CD4-positive, alpha-beta T cell (primary cell): ENCODE measurements at regions of chr11 and their contacts with region 1.

Region 1: DNA sequence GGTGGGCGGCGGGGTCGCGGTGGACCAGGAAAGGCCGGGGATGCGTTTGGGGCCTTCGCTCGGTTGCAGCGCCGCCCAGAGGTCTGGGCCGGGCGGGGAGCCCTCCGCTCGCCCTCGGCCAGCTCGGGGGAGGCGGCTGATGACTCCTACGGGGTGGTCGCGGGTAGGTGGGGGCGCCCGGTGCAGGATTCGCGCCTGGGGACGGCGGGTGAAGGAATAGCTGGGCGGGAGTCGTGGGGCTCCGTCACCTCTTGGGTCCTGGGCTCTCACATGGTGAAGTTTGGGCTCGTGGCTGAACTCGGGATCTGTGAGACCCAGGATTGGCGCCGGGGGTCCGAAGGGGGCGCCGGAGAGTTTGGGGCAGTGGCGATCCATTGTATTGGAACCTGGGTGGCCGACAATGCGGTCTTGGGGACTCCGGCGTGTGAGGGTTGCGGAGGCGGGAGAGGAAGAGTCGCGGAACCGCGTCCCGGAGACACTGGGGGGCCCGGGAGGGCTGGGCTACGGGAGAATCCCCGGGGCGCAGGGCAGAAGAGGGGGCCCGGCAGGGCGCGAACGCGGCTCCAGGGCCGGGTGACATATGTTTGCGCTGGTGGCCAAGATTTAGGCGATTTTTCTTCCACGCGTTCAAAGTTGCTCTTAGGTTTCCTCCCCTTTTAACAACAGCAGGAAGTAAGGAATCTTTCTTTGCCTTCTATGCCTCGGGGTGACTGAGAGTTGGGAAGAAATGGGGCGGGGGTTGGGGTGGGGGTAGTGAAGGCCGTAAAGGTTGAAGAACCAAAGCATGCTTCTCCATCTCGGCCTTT is 935 bp downstream of the QSER1 start:
- DNase-seq: peak in 11 of 14 experiments; percentile 22 to 76 (median 39)
- ATAC-seq: peak; percentile 35
- H3K4me3 ChIP-seq: peak overlapping the region; percentile 83
- H3K4me3 Mint-ChIP-seq: peak overlapping the region; percentile 91
- H3K27ac ChIP-seq: peak overlapping the region in 1 of 2 donors; percentile 18
- H3K27ac Mint-ChIP-seq: peak overlapping the region; percentile 80
- H3K4me1 ChIP-seq: peaks cover 14% of the 10 kb centered on the region
- H3K4me1 Mint-ChIP-seq: peaks cover 37% of the 10 kb centered on the region
- H3K27me3 ChIP-seq: no peaks in the 10 kb centered on the region
- H3K27me3 Mint-ChIP-seq: no peaks in the 10 kb centered on the region
- CTCF ChIP-seq: peak; percentile 48

Region 2: DNA sequence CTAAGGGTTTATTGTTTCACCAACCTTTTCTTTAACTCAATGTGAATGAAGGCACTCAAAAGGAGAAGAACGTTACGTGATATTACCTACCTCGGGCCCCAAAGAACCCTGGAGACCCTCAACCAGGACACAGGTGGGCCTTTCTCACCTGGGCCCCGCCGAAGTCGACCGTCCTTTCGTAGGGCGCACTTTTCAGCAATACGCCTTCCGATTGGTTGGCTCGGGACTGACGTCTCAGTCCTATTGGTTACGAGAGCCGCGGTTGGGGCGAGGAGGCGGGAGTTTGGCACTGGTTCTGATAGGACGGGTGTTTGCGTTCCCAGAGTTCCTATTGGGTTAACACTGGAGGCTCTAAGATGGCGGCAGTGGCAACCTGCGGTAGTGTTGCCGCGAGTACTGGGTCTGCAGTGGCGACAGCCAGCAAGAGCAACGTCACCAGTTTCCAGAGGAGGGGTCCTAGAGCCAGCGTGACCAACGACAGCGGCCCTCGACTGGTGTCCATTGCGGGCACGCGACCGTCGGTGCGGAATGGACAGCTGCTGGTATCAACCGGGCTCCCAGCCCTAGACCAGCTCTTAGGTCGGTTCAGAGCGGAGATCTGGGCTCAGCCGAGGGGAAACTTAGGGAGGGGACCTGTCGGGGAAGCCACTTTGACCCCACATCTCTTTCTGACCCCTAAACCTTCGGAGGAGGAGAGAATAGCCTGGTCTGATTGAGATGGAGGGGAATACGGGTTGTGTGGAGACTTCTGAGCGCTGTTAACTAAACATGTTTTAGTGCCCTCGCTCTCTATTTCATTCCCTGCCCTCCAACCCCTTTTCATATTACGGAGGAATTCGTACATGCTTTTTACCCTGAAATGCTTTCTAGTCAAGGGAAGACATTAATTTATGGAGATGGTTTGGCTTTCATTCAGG is 1383.9 kb before region 1 on chr11 and contains the starts of genes ELP4 and IMMP1L:
- CTCF ChIA-PET with region 1: no interaction called
- POLR2A ChIA-PET with region 1: no interaction called
- intact Hi-C with region 1: loop called in 1 of 2 experiments (anchors 10 kb)
- DNase-seq: peak; percentile 91 to 97 (median 93)
- ATAC-seq: peak; percentile 98
- H3K4me3 ChIP-seq: peak within 1 kb of the TSS; percentile 86
- H3K4me3 Mint-ChIP-seq: peak within 1 kb of the TSS; percentile 94
- H3K27ac ChIP-seq: peak within 1 kb of the TSS; percentile 82 to 87
- H3K27ac Mint-ChIP-seq: peak within 1 kb of the TSS; percentile 92
- H3K4me1 ChIP-seq: peaks cover 2% of the 10 kb centered on the region
- H3K4me1 Mint-ChIP-seq: peaks cover 63% of the 10 kb centered on the region
- H3K27me3 ChIP-seq: no peaks in the 10 kb centered on the region
- H3K27me3 Mint-ChIP-seq: no peaks in the 10 kb centered on the region
- CTCF ChIP-seq: no peak
- total RNA-seq, gene ELP4: 9.5 to 10.3 TPM
- total RNA-seq, gene IMMP1L: 6.0 to 6.9 TPM

Region 3: GRCh38 chr11:32852207-32852606 is 41.3 kb before region 1 on chr11:
- CTCF ChIA-PET with region 1: no interaction called
- POLR2A ChIA-PET with region 1: no interaction called
- intact Hi-C with region 1: no loop called
- DNase-seq: peak in 3 of 14 experiments; percentile 4 to 11 (median 5)
- ATAC-seq: no peak
- H3K4me3 ChIP-seq: no peak overlapping the region
- H3K4me3 Mint-ChIP-seq: no peak overlapping the region
- H3K27ac ChIP-seq: no peak overlapping the region
- H3K27ac Mint-ChIP-seq: no peak overlapping the region
- H3K4me1 ChIP-seq: no peaks in the 10 kb centered on the region
- H3K4me1 Mint-ChIP-seq: no peaks in the 10 kb centered on the region
- H3K27me3 ChIP-seq: no peaks in the 10 kb centered on the region
- H3K27me3 Mint-ChIP-seq: peaks cover 3% of the 10 kb centered on the region
- CTCF ChIP-seq: no peak

Region 4: GRCh38 chr11:33015621-33016551 is 122.3 kb after region 1 on chr11 and contains the start of gene DEPDC7:
- CTCF ChIA-PET with region 1: no interaction called
- POLR2A ChIA-PET with region 1: interaction called, 4 read pairs
- intact Hi-C with region 1: loop called in 1 of 2 experiments (anchors 10 kb)
- DNase-seq: peak; percentile 57 to 89 (median 74)
- ATAC-seq: peak; percentile 76
- H3K4me3 ChIP-seq: peak within 1 kb of the TSS; percentile 57
- H3K4me3 Mint-ChIP-seq: peak within 1 kb of the TSS; percentile 96
- H3K27ac ChIP-seq: no peak within 1 kb of the TSS
- H3K27ac Mint-ChIP-seq: peak within 1 kb of the TSS; percentile 73
- H3K4me1 ChIP-seq: peaks cover 30% of the 10 kb centered on the region
- H3K4me1 Mint-ChIP-seq: peaks cover 55% of the 10 kb centered on the region
- H3K27me3 ChIP-seq: peaks cover 12 to 15% of the 10 kb centered on the region in 2 experiments
- H3K27me3 Mint-ChIP-seq: peaks cover 10% of the 10 kb centered on the region
- CTCF ChIP-seq: no peak
- total RNA-seq, gene DEPDC7: 2.9 to 3.1 TPM

Region 5: GRCh38 chr11:33161120-33162005 is 267.8 kb after region 1 on chr11 and contains the start of gene CSTF3:
- CTCF ChIA-PET with region 1: no interaction called
- POLR2A ChIA-PET with region 1: interaction called, 6 read pairs
- intact Hi-C with region 1: loop called in 1 of 2 experiments (anchors 5 kb)
- DNase-seq: peak; percentile 87 to 98 (median 94)
- ATAC-seq: peak; percentile 94
- H3K4me3 ChIP-seq: peak within 1 kb of the TSS; percentile 99
- H3K4me3 Mint-ChIP-seq: peak within 1 kb of the TSS; percentile 99
- H3K27ac ChIP-seq: peak within 1 kb of the TSS; percentile 66 to 71
- H3K27ac Mint-ChIP-seq: peak within 1 kb of the TSS; percentile 92
- H3K4me1 ChIP-seq: peaks cover 19% of the 10 kb centered on the region
- H3K4me1 Mint-ChIP-seq: peaks cover 61% of the 10 kb centered on the region
- H3K27me3 ChIP-seq: no peaks in the 10 kb centered on the region
- H3K27me3 Mint-ChIP-seq: no peaks in the 10 kb centered on the region
- CTCF ChIP-seq: peak; percentile 47
- total RNA-seq, gene CSTF3: 6.4 to 9.9 TPM

Region 6: DNA sequence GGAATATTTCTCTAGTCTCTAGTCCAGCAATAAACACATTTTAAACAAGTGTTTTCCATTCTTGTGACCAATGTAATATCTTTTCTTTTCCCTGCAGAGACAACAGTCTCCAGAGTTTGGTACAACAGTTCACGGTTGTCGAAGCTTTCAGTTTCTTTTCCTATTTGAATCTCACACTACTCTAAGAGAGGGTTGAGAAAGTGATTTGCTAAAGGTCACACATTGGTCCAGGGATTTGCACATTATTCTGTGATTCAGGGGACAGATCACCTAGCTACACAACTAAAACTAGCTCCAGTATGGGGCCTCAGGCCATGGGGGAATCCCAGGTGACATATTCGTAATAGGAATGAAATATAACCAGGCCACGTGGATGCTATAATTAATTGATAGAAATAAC is 496.1 kb after region 1 on chr11:
- CTCF ChIA-PET with region 1: no interaction called
- POLR2A ChIA-PET with region 1: no interaction called
- intact Hi-C with region 1: no loop called
- DNase-seq: no peak
- ATAC-seq: no peak
- H3K4me3 ChIP-seq: no peak overlapping the region
- H3K4me3 Mint-ChIP-seq: no peak overlapping the region
- H3K27ac ChIP-seq: no peak overlapping the region
- H3K27ac Mint-ChIP-seq: no peak overlapping the region
- H3K4me1 ChIP-seq: no peaks in the 10 kb centered on the region
- H3K4me1 Mint-ChIP-seq: no peaks in the 10 kb centered on the region
- H3K27me3 ChIP-seq: peaks cover 0 to 6% of the 10 kb centered on the region in 2 experiments
- H3K27me3 Mint-ChIP-seq: peaks cover 22% of the 10 kb centered on the region
- CTCF ChIP-seq: no peak

Region 7: GRCh38 chr11:33700425-33701271 is 807.1 kb after region 1 on chr11 and contains the start of gene C11orf91:
- CTCF ChIA-PET with region 1: no interaction called
- POLR2A ChIA-PET with region 1: no interaction called
- intact Hi-C with region 1: loop called in 1 of 2 experiments (anchors 10 kb)
- DNase-seq: peak; percentile 84 to 98 (median 94)
- ATAC-seq: peak; percentile 93
- H3K4me3 ChIP-seq: peak within 1 kb of the TSS; percentile 68
- H3K4me3 Mint-ChIP-seq: peak within 1 kb of the TSS; percentile 95
- H3K27ac ChIP-seq: no peak within 1 kb of the TSS
- H3K27ac Mint-ChIP-seq: peak within 1 kb of the TSS; percentile 64
- H3K4me1 ChIP-seq: peaks cover 14% of the 10 kb centered on the region
- H3K4me1 Mint-ChIP-seq: peaks cover 33% of the 10 kb centered on the region
- H3K27me3 ChIP-seq: no peaks in the 10 kb centered on the region
- H3K27me3 Mint-ChIP-seq: peaks cover 10% of the 10 kb centered on the region
- CTCF ChIP-seq: no peak
- total RNA-seq, gene C11orf91: 0.45 TPM in 1 of 2 experiments, not detected in the other

Region 8: DNA sequence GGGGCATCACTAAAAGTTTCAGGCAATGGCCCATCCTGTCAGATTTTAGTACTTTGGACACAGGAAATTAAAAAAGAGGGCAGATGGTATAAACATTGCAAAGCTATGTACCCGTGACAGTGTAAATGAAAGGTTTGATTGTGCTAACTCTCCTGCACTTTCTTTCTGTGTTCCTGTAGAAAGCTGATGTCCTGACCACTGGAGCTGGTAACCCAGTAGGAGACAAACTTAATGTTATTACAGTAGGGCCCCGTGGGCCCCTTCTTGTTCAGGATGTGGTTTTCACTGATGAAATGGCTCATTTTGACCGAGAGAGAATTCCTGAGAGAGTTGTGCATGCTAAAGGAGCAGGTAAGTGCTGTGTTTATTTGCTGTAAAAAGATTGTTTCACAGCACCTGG is 1555.5 kb after region 1 on chr11:
- CTCF ChIA-PET with region 1: no interaction called
- POLR2A ChIA-PET with region 1: no interaction called
- intact Hi-C with region 1: loop called in 1 of 2 experiments (anchors 10 kb)
- DNase-seq: peak in 1 of 14 experiments; percentile 18
- ATAC-seq: no peak
- H3K4me3 ChIP-seq: no peak overlapping the region
- H3K4me3 Mint-ChIP-seq: no peak overlapping the region
- H3K27ac ChIP-seq: no peak overlapping the region
- H3K27ac Mint-ChIP-seq: no peak overlapping the region
- H3K4me1 ChIP-seq: peaks cover 12% of the 10 kb centered on the region
- H3K4me1 Mint-ChIP-seq: peaks cover 56% of the 10 kb centered on the region
- H3K27me3 ChIP-seq: no peaks in the 10 kb centered on the region
- H3K27me3 Mint-ChIP-seq: no peaks in the 10 kb centered on the region
- CTCF ChIP-seq: no peak